Activated B cell treated with CpG ODN at 0.5 μM for 24 hours (primary cell): ENCODE measurements at regions of chr7 and their contacts with region 1.

Region 1: DNA sequence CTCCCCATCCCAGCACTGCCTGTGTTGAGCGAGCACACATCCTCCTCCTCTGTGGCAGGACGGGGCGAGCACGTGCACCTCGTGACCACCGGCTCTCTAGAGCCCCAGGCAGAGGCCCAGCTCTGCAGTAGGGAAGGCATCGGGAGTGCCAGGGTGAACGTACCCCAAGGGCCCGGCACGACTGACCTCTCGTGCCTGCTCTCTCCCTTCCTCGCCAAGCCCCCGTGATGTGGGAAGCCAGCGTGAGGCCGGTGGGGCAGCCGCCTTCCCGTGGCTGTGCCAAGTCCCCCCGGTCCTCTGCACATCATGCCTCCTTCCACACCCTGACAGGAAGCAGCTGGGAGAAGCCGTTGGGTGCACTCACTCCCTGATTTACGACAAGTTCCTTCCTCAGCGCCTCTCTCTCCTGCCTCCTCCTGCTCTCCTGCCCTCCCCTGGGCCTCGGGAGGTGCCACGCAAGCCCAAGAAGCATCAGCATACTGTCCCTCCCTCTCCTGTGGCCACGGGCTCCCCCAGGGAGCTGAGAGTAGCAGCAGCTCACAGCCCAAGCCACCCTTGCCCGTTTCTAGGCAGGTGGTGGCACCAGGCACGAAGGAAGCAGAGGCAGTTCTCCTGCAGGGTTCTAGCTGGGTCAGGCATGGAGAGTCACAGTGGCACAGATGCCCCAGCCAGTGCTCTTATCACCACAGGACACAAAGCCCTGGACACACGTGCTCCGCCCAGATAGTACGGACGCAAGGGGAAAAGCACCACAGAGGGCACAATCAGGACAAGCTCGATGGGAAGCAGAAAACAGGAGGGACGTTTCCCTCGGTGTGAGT is 47.0 kb downstream of the AMZ1 start:
- DNase-seq: peak; percentile 28
- ATAC-seq: peak; percentile 54
- H3K4me3 Mint-ChIP-seq: peak overlapping the region; percentile 33
- H3K27ac Mint-ChIP-seq: peak overlapping the region; percentile 54
- H3K4me1 Mint-ChIP-seq: peaks cover 49% of the 10 kb centered on the region
- H3K27me3 Mint-ChIP-seq: no peaks in the 10 kb centered on the region
- CTCF ChIP-seq: no peak

Region 2: GRCh38 chr7:1368682-1369571 is 1366.0 kb before region 1 on chr7:
- CTCF ChIA-PET with region 1: no interaction called
- POLR2A ChIA-PET with region 1: no interaction called
- intact Hi-C with region 1: no loop called
- DNase-seq: no peak
- ATAC-seq: peak; percentile 58
- H3K4me3 Mint-ChIP-seq: peak overlapping the region; percentile 38
- H3K27ac Mint-ChIP-seq: no peak overlapping the region
- H3K4me1 Mint-ChIP-seq: peaks cover 2% of the 10 kb centered on the region
- H3K27me3 Mint-ChIP-seq: peaks cover 44% of the 10 kb centered on the region
- CTCF ChIP-seq: no peak

Region 3: DNA sequence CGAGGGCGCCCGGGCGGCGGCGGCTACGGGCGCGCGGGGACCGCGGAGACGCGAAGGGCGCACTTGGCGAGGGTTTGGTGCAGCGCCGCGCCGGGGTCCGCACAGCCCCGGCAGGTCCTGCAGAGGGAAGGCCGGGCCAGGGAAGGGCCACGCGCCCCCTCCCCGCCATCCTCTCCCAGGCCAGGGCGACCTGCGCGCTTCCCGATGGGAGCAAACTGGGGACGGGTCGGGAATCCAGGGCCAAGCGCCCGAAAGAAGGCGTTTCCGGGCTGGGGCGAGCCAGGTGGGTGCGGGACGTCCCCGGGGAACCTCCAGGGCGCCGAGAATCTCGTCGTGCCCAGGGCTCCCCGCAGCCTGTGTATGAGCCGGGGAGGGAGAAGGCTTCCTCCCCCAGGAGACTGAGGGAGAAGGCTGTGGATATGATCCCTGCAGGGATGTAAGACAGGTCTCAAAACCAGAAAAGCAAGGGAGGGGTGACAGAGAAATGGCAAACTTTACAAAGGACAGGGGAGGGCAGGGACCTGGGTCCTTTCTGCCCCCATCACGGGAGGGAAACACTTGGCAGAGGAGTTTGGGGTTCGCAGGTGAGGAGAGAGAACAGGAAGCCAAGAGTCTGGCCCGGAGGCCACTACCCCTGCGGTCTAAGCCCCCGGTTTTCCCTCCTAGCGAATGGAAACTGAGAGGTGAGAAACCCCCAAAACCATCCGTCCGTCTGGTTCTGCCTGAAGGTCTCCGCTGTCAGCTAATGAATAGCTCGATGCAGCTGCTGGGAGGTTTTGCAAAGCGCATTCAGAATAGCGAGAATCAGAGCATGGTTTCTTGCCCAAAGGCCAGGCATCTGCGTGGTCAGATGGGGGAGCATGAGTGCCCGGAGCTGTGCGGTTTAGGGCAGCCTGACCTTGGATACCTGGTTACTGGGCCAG is 46.3 kb before region 1 on chr7:
- CTCF ChIA-PET with region 1: interaction called, 4 read pairs
- POLR2A ChIA-PET with region 1: no interaction called
- intact Hi-C with region 1: loop called (anchors 5 kb)
- DNase-seq: no peak
- ATAC-seq: peak; percentile 65
- H3K4me3 Mint-ChIP-seq: peak overlapping the region; percentile 45
- H3K27ac Mint-ChIP-seq: no peak overlapping the region
- H3K4me1 Mint-ChIP-seq: peaks cover 8% of the 10 kb centered on the region
- H3K27me3 Mint-ChIP-seq: peaks cover 29% of the 10 kb centered on the region
- CTCF ChIP-seq: no peak

Region 4: DNA sequence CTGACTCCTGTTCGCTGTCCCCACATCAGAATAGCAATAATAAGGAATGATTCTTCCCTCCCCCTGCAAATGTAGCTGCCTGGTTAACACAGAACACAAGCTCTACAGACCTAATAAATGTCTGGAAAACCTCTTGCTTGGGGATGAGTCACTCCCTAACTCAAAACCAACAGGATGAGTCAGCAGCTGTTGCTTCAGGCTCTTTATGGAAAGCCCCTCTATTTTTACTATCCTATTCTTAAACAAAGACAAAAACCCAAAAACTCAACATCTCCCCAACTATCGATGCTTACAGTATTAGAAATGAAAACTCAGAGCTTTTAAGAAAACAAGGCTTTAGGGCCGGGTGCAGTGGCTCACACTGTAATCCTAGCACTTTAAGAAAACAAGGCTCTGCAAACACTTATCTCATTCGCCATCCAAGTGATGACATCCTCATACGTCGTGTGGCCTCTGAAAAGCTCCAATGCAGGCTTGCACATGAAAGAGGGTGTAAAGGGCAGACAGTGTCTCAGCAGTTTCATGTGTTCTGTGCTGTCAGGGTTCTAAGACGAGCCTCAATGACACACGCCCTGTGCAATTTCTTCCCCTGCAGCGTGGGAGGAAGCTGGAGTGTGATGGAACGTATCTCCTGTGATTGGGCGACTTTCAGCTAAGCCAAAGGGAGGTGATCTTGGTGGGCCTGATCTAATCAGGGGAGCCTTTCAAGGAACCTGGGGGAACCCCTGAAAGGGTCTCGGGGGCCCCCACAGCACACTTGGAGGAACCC is 23.1 kb after region 1 on chr7:
- CTCF ChIA-PET with region 1: no interaction called
- POLR2A ChIA-PET with region 1: interaction called, 5 read pairs
- intact Hi-C with region 1: loop called (anchors 2 kb)
- DNase-seq: peak; percentile 24
- ATAC-seq: peak; percentile 82
- H3K4me3 Mint-ChIP-seq: peak overlapping the region; percentile 65
- H3K27ac Mint-ChIP-seq: peak overlapping the region; percentile 89
- H3K4me1 Mint-ChIP-seq: peaks cover 45% of the 10 kb centered on the region
- H3K27me3 Mint-ChIP-seq: no peaks in the 10 kb centered on the region
- CTCF ChIP-seq: no peak